KBM-7 (cell line): ENCODE measurements at regions of chr3 and their contacts with region 1.

Region 1: GRCh38 chr3:155323063-155323666 is 29.7 kb upstream of the STRIT1 start:
- DNase-seq: peak; percentile 84

Region 2: GRCh38 chr3:154758109-154758868 is 564.9 kb before region 1 on chr3:
- in situ Hi-C with region 1: loop called (anchors 25 kb)
- DNase-seq: peak; percentile 51

Region 3: GRCh38 chr3:154954753-154955152 is 368.4 kb before region 1 on chr3:
- in situ Hi-C with region 1: loop called (anchors 25 kb)
- DNase-seq: peak; percentile 65